K562 (cell line): ENCODE measurements at regions of chrX and their contacts with region 1.

Region 1: GRCh38 chrX:50204364-50204899 is at the start of gene CCNB3:
- DNase-seq: peak; percentile 53 to 71 (median 62)
- ATAC-seq: peak; percentile 93
- H3K4me3 ChIP-seq: no peak within 1 kb of the TSS
- H3K27ac ChIP-seq: no peak within 1 kb of the TSS; the same call in 2 of the 3 replicates
- H3K4me1 ChIP-seq: peaks cover 0 to 5% of the 10 kb centered on the region in 2 experiments; a peak in 2 of 5 replicates
- H3K27me3 ChIP-seq: no peaks in the 10 kb centered on the region
- CTCF ChIP-seq: peak; percentile 83 to 99 (median 98)
- EP300 ChIP-seq: no peak
- POLR2A ChIP-seq: no peak
- RAD21 ChIP-seq: peak; percentile 55 to 69
- polyA plus RNA-seq, gene CCNB3: 0.06 TPM in 1 of 2 experiments, not detected in the other

Region 2: GRCh38 chrX:49884290-49884862 is 320.1 kb before region 1 on chrX:
- CTCF ChIA-PET with region 1: interaction called, 5 read pairs
- POLR2A ChIA-PET with region 1: no interaction called
- in situ Hi-C with region 1: no loop called
- intact Hi-C with region 1: loop called (anchors 1 kb)
- DNase-seq: peak; percentile 39 to 67 (median 40)
- ATAC-seq: peak; percentile 72
- H3K4me3 ChIP-seq: no peak overlapping the region
- H3K27ac ChIP-seq: no peak overlapping the region
- H3K4me1 ChIP-seq: peaks cover 0 to 3% of the 10 kb centered on the region in 2 experiments; a peak in 3 of 5 replicates
- H3K27me3 ChIP-seq: peaks cover 0 to 7% of the 10 kb centered on the region in 2 experiments; a peak in 1 of 5 replicates
- CTCF ChIP-seq: peak; percentile 76 to 89 (median 77)
- EP300 ChIP-seq: no peak
- POLR2A ChIP-seq: no peak
- RAD21 ChIP-seq: peak; percentile 15 to 54; a peak in 2 of 4 replicates

Region 3: DNA sequence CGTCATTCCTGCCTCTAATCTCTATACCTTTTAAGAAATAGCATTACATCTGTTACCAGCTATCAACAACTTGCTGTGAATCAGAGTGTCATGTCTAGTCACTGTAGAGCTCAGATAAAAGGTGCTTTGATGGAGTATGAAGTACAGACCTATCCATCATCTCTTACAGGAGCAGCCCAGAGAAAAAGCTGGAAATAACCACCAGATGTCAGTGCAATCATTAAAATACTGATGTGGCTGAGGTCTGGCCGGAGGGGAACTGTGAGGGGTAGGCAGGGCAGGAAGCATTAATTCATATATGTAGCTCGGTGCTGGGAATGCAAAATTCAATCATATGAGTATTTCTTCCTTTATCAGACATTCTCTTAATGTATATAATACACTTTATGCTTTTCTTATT is 104.2 kb before region 1 on chrX:
- CTCF ChIA-PET with region 1: interaction called, 35 read pairs
- POLR2A ChIA-PET with region 1: no interaction called
- in situ Hi-C with region 1: loop called (anchors 5 kb)
- intact Hi-C with region 1: loop called (anchors 1 kb)
- DNase-seq: peak; percentile 9 to 41 (median 24)
- ATAC-seq: peak; percentile 88
- H3K4me3 ChIP-seq: no peak overlapping the region
- H3K27ac ChIP-seq: no peak overlapping the region
- H3K4me1 ChIP-seq: no peaks in the 10 kb centered on the region
- H3K27me3 ChIP-seq: no peaks in the 10 kb centered on the region
- CTCF ChIP-seq: peak; percentile 46 to 64 (median 64); a peak in 4 of 6 replicates
- EP300 ChIP-seq: no peak
- POLR2A ChIP-seq: no peak
- RAD21 ChIP-seq: peak; percentile 65 to 68

Region 4: GRCh38 chrX:50579955-50580354 is 375.5 kb after region 1 on chrX:
- CTCF ChIA-PET with region 1: no interaction called
- POLR2A ChIA-PET with region 1: no interaction called
- in situ Hi-C with region 1: loop called (anchors 25 kb)
- intact Hi-C with region 1: no loop called
- DNase-seq: peak; percentile 25 to 62 (median 44)
- ATAC-seq: peak; percentile 87
- H3K4me3 ChIP-seq: no peak overlapping the region
- H3K27ac ChIP-seq: no peak overlapping the region
- H3K4me1 ChIP-seq: no peaks in the 10 kb centered on the region
- H3K27me3 ChIP-seq: no peaks in the 10 kb centered on the region
- CTCF ChIP-seq: peak; percentile 47 to 59 (median 56); a peak in 5 of 6 replicates
- EP300 ChIP-seq: no peak
- POLR2A ChIP-seq: no peak
- RAD21 ChIP-seq: peak; percentile 54 to 64